Gastrocnemius medialis (tissue), 4 donors: ENCODE measurements at regions of chr3 and their contacts with region 1.

Region 1: GRCh38 chr3:149384911-149385321 is 7.5 kb upstream of the TM4SF1 start:
- DNase-seq: peak; percentile 17 to 41
- ATAC-seq: peak; percentile 85 to 90
- H3K4me3 ChIP-seq: no peak overlapping the region
- H3K27ac ChIP-seq: peak overlapping the region; percentile 14 to 62 (median 43)
- H3K4me1 ChIP-seq: peaks cover 4 to 7% of the 10 kb centered on the region in 2 donors
- H3K27me3 ChIP-seq: no peaks in the 10 kb centered on the region
- CTCF ChIP-seq: no peak
- POLR2A ChIP-seq: no peak

Region 2: DNA sequence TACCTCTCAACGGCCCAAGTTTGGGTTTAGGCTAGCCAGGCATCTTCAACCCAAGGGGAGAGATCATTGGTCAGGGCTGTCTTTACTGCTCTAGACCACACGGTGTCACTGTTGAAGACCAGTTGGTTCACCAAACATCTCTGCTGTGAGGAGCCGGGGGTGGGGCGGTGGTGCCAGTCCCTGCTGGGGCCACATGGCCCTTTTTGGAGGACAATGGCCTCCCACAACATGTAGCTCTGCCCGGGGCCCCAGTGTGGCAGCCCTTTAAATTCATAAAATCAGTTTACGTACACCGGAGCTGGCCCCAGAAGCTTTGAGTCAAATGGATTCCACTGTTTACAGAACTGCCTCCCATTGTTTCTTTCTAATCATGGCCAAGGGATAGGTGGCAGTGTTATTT is 32.4 kb before region 1 on chr3:
- in situ Hi-C with region 1: no loop called
- intact Hi-C with region 1: loop called (anchors 5 kb)
- DNase-seq: peak in 1 of 2 donors; percentile 12
- ATAC-seq: peak; percentile 56 to 85
- H3K4me3 ChIP-seq: no peak overlapping the region
- H3K27ac ChIP-seq: peak overlapping the region in 1 of 4 donors; percentile 2
- H3K4me1 ChIP-seq: peaks cover 0 to 3% of the 10 kb centered on the region in 2 donors
- H3K27me3 ChIP-seq: no peaks in the 10 kb centered on the region
- CTCF ChIP-seq: peak; percentile 36 to 73 (median 59)
- POLR2A ChIP-seq: no peak